ENCODE measurements at regions of chr2 and their contacts with region 1.

Region 1: DNA sequence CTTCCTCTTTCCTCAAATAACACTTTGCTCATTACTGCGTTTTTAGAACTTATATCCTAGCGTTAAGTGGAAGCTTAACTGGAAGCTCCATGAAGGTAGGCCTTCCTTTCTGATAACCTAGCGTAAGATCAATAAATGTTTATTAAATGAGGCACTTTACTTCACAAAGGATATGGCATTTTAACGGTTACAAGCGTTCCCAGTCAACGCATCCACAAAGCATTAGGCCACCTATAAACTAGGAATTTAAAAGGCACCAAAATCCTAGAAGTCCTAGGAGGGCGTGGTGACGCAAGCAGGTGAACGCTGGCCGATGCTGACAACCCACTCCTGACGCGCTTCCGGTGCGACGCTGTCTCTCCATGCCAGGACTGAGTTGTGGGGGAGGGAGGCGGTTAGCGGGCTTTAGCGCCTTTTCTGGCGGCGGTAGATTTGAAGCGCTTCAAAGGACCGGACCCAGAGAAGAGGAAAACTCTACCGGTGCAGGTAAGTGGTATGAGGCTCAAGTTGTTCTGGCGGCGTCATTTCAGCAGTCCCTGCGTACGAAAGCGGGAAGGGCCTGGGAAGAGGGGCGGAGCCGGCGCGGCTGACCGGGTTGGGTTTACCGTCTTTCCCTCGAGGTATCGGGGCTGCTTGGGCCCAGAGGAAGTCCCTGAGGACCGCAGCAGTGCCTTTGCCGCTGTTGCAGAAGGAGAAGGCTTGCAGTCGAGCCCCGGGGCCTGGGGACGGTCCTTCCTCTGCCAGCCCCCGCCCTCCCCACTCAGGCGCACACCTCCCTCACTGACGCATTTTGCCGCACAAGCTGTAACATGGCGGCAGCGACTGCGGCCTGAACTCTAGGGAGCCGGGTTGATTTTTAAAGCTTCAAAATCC is at the start of gene PPIG:
- H3K4me3 Mint-ChIP-seq: peak within 1 kb of the TSS; percentile 98
- H3K27ac Mint-ChIP-seq: peak within 1 kb of the TSS; percentile 99
- H3K4me1 Mint-ChIP-seq: peaks cover 11% of the 10 kb centered on the region
- H3K27me3 Mint-ChIP-seq: peaks cover under 1% of the 10 kb centered on the region

Region 2: DNA sequence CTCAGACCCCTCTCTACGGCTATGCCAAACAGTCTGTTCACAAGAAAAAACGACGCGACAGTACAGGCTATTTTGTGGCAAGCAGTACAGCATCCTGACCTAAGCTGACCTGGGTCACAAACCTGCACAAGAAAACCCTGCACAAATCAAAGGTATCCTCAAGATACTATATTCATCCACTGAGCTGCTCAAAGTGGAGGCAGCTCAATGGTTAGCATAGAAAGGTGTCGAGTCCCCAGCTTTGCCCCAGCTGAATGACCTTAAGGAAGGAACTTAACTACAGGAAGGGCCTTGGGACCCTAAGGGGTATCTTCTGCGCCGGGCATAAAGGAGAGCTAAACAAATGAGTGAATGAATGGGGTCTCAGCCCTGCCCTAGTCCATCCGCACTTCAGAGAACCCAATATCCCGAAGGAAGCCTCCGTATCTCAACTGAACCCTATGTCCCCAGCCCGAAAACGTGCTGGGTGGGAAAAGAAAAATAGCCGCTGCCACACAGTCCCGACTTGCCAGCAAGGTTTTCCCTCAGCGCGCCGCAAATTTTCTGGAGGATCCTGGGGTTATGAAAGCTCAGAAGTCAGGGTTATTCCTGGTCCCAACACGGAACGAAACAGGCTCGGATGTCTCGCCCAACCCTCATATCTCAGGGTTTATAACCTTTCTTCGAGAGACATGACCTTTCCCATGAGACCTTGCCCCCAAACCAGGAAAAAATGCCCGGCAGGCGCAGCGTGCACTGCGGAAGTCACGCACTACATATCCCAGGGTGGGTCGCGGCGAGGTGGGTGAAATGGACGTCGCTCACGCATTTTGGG is 10.9 kb before region 1 on chr2 and contains the start of gene FASTKD1:
- intact Hi-C with region 1: loop called (anchors 1 kb)
- H3K4me3 Mint-ChIP-seq: peak within 1 kb of the TSS; percentile 92
- H3K27ac Mint-ChIP-seq: peak within 1 kb of the TSS; percentile 90
- H3K4me1 Mint-ChIP-seq: peaks cover 20% of the 10 kb centered on the region
- H3K27me3 Mint-ChIP-seq: peaks cover 4% of the 10 kb centered on the region

Region 3: GRCh38 chr2:169694113-169694903 is 110.1 kb after region 1 on chr2 and contains the starts of genes CFAP210 and PHOSPHO2:
- intact Hi-C with region 1: loop called (anchors 2 kb)
- H3K4me3 Mint-ChIP-seq: peak within 1 kb of the TSS; percentile 79
- H3K27ac Mint-ChIP-seq: peak within 1 kb of the TSS; percentile 77
- H3K4me1 Mint-ChIP-seq: peaks cover 10% of the 10 kb centered on the region
- H3K27me3 Mint-ChIP-seq: peaks cover 9% of the 10 kb centered on the region

Region 4: DNA sequence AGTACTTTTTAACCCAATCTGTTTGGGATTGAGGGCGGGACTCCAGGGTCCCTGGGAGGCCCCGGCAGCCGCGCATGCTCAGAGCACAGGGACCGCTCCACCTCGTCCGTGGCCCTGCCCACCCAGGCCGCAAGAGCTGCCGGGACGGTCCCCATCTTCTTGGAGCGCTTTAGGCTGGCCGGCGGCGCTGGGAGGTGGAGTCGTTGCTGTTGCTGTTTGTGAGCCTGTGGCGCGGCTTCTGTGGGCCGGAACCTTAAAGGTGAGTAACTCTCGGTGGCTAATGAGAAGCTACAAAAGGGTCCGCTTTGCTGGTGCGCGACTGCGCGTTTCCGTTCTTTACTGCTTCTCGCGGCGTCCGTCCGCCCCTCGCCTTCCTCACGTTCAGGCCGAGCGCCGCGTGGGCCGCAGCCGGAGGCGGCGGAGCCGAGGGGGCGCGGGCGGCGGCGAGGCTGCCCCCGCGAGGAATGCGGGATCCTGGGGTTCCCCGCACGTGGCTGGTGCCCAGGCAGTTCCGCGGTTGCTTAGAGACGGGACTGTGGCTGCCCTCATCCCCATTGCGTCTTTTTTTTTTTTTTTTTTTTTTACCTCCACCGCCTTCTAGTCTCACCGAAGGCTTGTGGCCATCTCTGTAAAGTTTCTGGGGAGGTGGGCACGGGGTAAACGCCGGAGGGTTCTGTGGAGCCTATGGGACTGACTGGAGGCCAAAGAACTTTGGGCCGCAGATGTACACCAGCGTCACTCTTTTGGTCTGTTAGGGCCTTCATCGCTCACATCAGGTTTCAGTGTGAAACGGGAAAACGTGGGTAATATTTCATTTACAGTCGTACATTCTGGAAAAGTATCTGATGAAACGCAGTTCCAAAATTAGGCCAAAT is 214.7 kb after region 1 on chr2 and contains the start of gene SSB:
- intact Hi-C with region 1: loop called (anchors 10 kb)
- H3K4me3 Mint-ChIP-seq: peak within 1 kb of the TSS; percentile 80
- H3K27ac Mint-ChIP-seq: peak within 1 kb of the TSS; percentile 77
- H3K4me1 Mint-ChIP-seq: peaks cover 6% of the 10 kb centered on the region
- H3K27me3 Mint-ChIP-seq: peaks cover 8% of the 10 kb centered on the region

Region 5: GRCh38 chr2:169877398-169877797 is 293.2 kb after region 1 on chr2:
- intact Hi-C with region 1: no loop called
- H3K4me3 Mint-ChIP-seq: no peak overlapping the region
- H3K27ac Mint-ChIP-seq: no peak overlapping the region
- H3K4me1 Mint-ChIP-seq: no peaks in the 10 kb centered on the region
- H3K27me3 Mint-ChIP-seq: no peaks in the 10 kb centered on the region